ENCODE measurements at regions of chr17 and their contacts with region 1.

Region 1: GRCh38 chr17:82611140-82612058 is 36.8 kb downstream of the WDR45B start:
- DNase-seq: no peak
- H3K4me3 ChIP-seq: no peak overlapping the region
- H3K27ac ChIP-seq: no peak overlapping the region
- H3K4me1 ChIP-seq: peaks cover 0 to 5% (median 0%) of the 10 kb centered on the region in 4 donors
- H3K27me3 ChIP-seq: no peaks in the 10 kb centered on the region
- CTCF ChIP-seq: no peak
- EP300 ChIP-seq: no peak
- POLR2A ChIP-seq: no peak

Region 2: GRCh38 chr17:81537343-81537855 is 1074.0 kb before region 1 on chr17:
- in situ Hi-C with region 1: no loop called
- intact Hi-C with region 1: loop called (anchors 5 kb)
- DNase-seq: peak; percentile 67
- H3K4me3 ChIP-seq: no peak overlapping the region
- H3K27ac ChIP-seq: no peak overlapping the region
- H3K4me1 ChIP-seq: peaks cover 7 to 17% (median 11%) of the 10 kb centered on the region in 4 donors
- H3K27me3 ChIP-seq: peaks cover 25% of the 10 kb centered on the region
- CTCF ChIP-seq: peak; percentile 54 to 92 (median 77)
- EP300 ChIP-seq: no peak
- POLR2A ChIP-seq: no peak

Region 3: GRCh38 chr17:82623707-82624106 is 12.3 kb after region 1 on chr17:
- in situ Hi-C with region 1: no loop called
- intact Hi-C with region 1: no loop called
- DNase-seq: no peak
- H3K4me3 ChIP-seq: no peak overlapping the region
- H3K27ac ChIP-seq: no peak overlapping the region
- H3K4me1 ChIP-seq: no peaks in the 10 kb centered on the region
- H3K27me3 ChIP-seq: no peaks in the 10 kb centered on the region
- CTCF ChIP-seq: no peak
- EP300 ChIP-seq: no peak
- POLR2A ChIP-seq: no peak

Region 4: GRCh38 chr17:82696916-82697807 is 85.8 kb after region 1 on chr17:
- in situ Hi-C with region 1: no loop called
- intact Hi-C with region 1: no loop called
- DNase-seq: no peak
- H3K4me3 ChIP-seq: peak overlapping the region; percentile 63 to 95 (median 76)
- H3K27ac ChIP-seq: peak overlapping the region in 3 of 4 donors; percentile 72 to 89 (median 84)
- H3K4me1 ChIP-seq: peaks cover 10 to 29% (median 26%) of the 10 kb centered on the region in 4 donors
- H3K27me3 ChIP-seq: no peaks in the 10 kb centered on the region
- CTCF ChIP-seq: no peak
- EP300 ChIP-seq: no peak
- POLR2A ChIP-seq: no peak

Measured in transverse colon (tissue), 4 donors.